MCF 10A (cell line): ENCODE measurements at regions of chr1 and their contacts with region 1.

Region 1: GRCh38 chr1:62841587-62842169 is 57.7 kb downstream of the ATG4C start:
- DNase-seq: peak; percentile 69
- H3K4me3 Mint-ChIP-seq: no peak overlapping the region
- H3K27ac Mint-ChIP-seq: no peak overlapping the region
- H3K4me1 Mint-ChIP-seq: no peaks in the 10 kb centered on the region
- H3K27me3 Mint-ChIP-seq: no peaks in the 10 kb centered on the region
- CTCF ChIP-seq: peak; percentile 47

Region 2: DNA sequence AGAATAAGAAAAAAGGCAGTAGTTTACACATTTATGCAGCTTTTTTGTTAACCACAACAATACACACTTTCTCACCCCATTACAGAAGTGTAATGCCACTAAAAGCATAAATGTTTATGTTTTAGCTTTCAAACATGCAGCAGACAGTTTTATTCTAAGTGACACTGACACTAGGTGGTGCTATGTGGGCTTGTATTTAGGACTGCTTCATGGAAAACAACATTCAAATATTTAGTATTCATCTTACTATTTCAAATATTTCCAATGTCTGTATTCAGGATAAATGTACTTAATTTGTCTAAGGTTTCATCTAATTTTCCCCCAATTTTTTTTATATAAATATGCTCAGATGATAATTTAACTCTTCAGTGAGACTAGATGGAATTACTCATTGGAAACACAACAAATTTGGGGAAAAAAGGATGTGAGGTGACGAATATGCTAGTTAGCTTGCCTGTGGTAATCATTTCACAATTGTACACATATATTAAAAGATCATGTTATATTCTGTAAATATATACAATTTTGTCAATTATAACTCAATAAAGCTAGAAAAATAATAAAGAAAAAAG is 333.4 kb before region 1 on chr1:
- CTCF ChIA-PET with region 1: no interaction called
- POLR2A ChIA-PET with region 1: no interaction called
- intact Hi-C with region 1: loop called (anchors 10 kb)
- DNase-seq: peak; percentile 58
- H3K4me3 Mint-ChIP-seq: no peak overlapping the region
- H3K27ac Mint-ChIP-seq: no peak overlapping the region
- H3K4me1 Mint-ChIP-seq: no peaks in the 10 kb centered on the region
- H3K27me3 Mint-ChIP-seq: no peaks in the 10 kb centered on the region
- CTCF ChIP-seq: peak; percentile 46